ENCODE measurements at regions of chr12 and their contacts with region 1.

Region 1: DNA sequence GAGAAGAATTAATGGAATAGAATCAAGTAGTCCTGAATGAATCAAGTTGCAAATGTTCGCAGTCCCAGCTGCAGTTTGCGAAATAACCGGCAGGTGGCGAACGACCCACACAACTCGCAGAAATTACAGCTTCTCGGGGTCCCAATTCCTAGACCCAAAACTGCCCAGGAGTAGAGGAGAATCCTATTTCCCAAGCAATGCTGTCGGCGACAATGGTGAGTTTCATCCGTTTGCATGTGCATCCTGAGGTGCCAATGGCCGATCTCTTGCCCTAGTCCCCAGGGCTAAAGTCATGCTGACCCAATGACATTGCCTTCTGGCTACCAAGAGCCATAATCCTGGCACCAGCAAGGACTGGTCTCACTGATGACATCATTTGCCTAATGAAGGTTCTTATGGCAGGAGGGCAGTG is 8.5 kb upstream of the ASCL1 start:
- H3K4me3 Mint-ChIP-seq: no peak overlapping the region
- H3K27ac Mint-ChIP-seq: no peak overlapping the region
- H3K4me1 Mint-ChIP-seq: peaks cover 6% of the 10 kb centered on the region
- H3K27me3 Mint-ChIP-seq: peaks cover 52% of the 10 kb centered on the region

Region 2: GRCh38 chr12:103503977-103504376 is 555.0 kb after region 1 on chr12:
- intact Hi-C with region 1: loop called (anchors 5 kb)
- H3K4me3 Mint-ChIP-seq: no peak overlapping the region
- H3K27ac Mint-ChIP-seq: no peak overlapping the region
- H3K4me1 Mint-ChIP-seq: no peaks in the 10 kb centered on the region
- H3K27me3 Mint-ChIP-seq: peaks cover 1% of the 10 kb centered on the region

Measured in dendritic cell treated with granulocyte-macrophage colony-stimulating factor and Interleukin-4, amounts not matched to agents 40 ng/mL and 50 ng/mL, for 4 days (primary cell).